ENCODE measurements at regions of chr12 and their contacts with region 1.

Region 1: DNA sequence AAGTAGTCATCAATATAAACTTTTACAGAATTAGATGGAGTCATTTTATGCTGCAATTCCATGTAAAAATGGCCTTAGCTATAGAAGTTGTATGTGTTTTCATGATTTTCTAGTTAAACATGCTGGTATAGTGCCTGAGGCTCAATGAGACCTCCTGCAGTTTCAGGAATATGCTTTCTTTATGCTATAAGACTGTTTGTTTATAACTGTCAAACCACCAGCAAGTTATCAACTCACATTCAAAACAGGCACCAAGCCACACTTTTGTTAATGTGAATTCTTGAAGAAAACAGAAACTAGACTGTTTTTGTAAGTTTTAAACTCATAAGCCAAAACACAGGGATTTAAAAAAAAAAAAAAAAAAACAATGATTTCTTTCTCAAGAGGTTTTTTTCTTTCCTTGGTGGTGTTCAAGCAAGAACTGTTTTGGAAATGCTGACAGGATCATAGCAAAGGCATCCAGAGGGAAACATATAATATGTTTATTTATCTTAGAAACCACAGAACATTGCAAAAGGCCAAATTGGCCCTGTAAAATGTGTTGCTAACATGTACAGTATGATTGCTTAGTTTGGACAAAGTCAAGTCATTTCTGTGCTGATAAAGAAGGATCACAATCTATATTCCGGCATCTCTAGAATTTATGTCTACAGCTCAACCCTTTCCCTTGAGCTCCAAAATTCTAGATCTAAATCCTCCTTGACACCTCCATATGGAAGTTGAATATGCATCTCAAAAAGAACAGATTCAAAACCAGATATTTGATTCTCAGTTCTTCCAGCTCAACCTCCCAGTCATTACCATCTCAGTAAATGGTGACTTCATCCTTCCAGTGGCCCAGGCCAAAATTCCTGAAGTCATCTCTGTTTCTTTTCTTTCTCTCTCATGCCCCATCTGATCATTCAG is 29.0 kb upstream of the LUM start:
- DNase-seq: no peak
- H3K4me3 ChIP-seq: no peak overlapping the region
- H3K27ac ChIP-seq: peak overlapping the region; percentile 28 to 76 (median 66)
- H3K4me1 ChIP-seq: peaks cover 0 to 66% (median 57%) of the 10 kb centered on the region in 4 donors
- H3K27me3 ChIP-seq: no peaks in the 10 kb centered on the region
- CTCF ChIP-seq: no peak
- EP300 ChIP-seq: no peak
- POLR2A ChIP-seq: no peak

Region 2: DNA sequence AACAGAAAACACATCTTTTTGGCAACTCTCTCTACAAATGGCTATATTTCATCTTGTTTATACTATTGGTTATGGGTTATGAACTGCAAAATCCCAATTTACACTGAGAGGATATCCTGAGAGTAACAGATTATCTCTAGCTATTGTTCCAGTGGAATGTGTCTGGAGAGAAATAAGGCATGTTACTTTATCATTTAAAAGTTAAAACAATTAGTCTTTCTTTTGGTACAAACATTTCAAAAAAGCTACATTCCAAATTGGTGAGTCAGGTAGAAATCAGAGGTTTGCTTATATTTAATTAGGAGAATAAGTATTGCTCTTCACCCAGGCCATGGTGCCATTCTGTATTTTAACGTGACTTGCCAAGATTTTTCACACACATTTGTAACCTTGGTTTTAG is 596.9 kb before region 1 on chr12:
- intact Hi-C with region 1: no loop called
- DNase-seq: no peak
- H3K4me3 ChIP-seq: no peak overlapping the region
- H3K27ac ChIP-seq: no peak overlapping the region
- H3K4me1 ChIP-seq: no peaks in the 10 kb centered on the region
- H3K27me3 ChIP-seq: no peaks in the 10 kb centered on the region
- CTCF ChIP-seq: no peak
- EP300 ChIP-seq: no peak
- POLR2A ChIP-seq: no peak

Region 3: GRCh38 chr12:90940872-90941499 is 199.3 kb before region 1 on chr12:
- intact Hi-C with region 1: no loop called
- DNase-seq: no peak
- H3K4me3 ChIP-seq: no peak overlapping the region
- H3K27ac ChIP-seq: no peak overlapping the region
- H3K4me1 ChIP-seq: no peaks in the 10 kb centered on the region
- H3K27me3 ChIP-seq: no peaks in the 10 kb centered on the region
- CTCF ChIP-seq: peak in 3 of 4 experiments; percentile 34 to 60 (median 49)
- EP300 ChIP-seq: no peak
- POLR2A ChIP-seq: no peak

Region 4: DNA sequence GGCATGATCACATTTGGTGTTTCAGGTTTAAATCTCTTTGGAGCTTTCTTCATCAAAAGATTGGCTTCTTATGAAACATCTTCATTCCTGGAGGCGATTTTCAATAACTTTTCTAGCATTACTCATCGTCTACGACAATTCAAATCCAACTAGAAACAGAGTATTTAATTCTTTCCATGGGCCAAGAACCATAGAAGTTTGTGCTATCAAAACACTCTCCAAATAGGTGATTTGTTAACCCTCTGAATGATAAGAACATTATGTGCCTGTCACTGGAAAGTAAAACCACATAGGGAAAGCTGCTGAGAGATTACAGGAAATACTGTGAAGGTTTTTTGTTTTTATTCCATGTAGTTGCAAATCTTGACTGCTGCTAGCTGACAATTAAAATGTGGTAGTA is 49.2 kb after region 1 on chr12:
- intact Hi-C with region 1: loop called (anchors 5 kb)
- DNase-seq: no peak
- H3K4me3 ChIP-seq: no peak overlapping the region
- H3K27ac ChIP-seq: peak overlapping the region in 3 of 4 donors; percentile 25 to 40 (median 34)
- H3K4me1 ChIP-seq: peaks cover 0 to 25% (median 17%) of the 10 kb centered on the region in 4 donors
- H3K27me3 ChIP-seq: no peaks in the 10 kb centered on the region
- CTCF ChIP-seq: no peak
- EP300 ChIP-seq: no peak
- POLR2A ChIP-seq: no peak

Measured in sigmoid colon (tissue), 7 donors.